Cardiac septum (tissue), 1 donor: ENCODE measurements at regions of chr9 and their contacts with region 1.

Region 1: DNA sequence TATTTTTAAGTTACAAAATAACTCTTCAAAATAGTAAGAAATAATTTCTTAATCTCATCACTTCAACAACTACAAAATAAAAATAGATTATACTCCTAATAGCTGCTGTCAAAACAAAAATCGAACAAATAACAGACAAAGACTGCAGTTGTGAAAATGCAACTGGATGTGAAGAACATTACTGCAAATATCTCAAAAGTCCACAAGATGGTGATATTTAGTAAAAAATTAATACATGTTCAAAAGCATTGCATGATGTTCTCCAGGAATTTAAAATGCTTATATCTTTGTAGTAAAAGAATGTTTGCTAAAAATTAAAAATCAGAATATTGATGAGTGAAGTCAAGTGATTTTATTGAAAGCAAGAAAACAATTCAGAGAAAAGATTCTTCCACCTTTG is 66.2 kb downstream of the MPDZ start:
- DNase-seq: no peak

Region 2: GRCh38 chr9:12748016-12748415 is 465.3 kb before region 1 on chr9:
- intact Hi-C with region 1: no loop called
- DNase-seq: no peak

Region 3: GRCh38 chr9:12889402-12890106 is 323.8 kb before region 1 on chr9:
- intact Hi-C with region 1: no loop called
- DNase-seq: no peak

Region 4: DNA sequence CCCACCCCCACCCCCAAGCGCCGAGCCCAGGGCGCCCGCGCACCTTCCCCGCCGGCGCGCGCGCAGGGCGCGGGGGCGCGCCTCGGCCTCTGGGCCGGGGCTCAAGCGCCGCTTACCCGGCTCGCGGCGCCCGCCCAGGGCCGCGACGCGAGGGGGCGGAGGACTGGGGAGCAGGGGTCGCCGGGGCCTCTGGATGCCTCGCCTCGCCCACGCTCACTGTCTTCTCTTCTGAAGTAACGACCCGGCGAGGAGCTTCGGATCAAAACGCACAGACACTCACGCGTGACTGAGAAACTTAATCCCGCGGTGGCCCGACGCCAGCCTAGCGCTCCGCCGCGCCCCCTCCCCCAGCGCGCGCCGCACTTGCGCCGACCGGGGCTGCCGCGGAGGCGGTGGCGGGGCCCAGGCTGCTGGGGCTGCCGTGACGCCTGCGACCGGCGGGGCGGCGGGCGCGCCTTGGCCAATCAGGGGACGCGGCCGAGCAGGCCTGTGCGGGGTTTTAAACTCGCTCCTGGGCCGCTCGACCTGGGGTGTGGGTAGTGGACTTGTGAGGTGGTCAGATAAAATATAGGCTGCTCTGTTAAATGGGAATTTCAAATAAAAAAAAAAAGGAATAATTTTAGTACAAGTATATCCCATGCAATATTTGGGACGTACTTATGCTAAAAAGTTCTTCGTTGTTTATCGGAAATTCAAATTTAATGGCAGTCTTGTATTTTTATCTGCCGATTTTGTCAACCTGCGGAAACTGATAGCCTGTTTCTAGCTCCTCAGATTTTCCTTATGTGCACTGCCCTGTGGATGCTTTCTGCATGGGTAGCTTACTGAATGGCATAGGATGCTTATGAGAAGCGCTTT is 66.2 kb after region 1 on chr9 and contains the start of gene MPDZ:
- intact Hi-C with region 1: loop called (anchors 5 kb)
- DNase-seq: peak; percentile 82
- total RNA-seq, gene MPDZ: 97.3 TPM

Region 5: GRCh38 chr9:13330396-13331004 is 117.2 kb after region 1 on chr9:
- intact Hi-C with region 1: loop called (anchors 10 kb)
- DNase-seq: peak; percentile 77

Region 6: DNA sequence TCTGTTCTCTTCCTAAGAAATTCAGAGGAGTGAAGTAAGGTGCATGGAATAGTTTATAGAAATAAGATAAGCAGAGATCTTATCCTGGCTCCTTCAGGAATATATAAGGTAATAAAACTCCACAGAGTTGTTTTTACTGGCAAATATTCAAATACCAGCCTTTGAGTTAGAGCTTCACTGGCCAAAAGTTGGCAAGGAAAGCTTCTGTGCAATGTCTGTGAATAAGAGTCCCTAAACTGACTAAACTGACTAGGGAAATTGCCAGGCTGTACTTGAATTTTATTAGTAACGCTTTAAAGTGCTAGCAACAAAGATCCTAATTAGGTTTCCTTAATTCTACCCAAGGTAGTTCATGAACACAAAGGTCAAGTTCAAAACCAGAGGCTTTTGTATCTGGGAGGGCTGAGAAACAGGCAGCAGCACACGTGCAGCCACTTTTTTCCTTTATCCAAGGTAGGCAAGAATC is 197.3 kb after region 1 on chr9:
- intact Hi-C with region 1: no loop called
- DNase-seq: no peak